ENCODE measurements at regions of chr3 and their contacts with region 1.

Region 1: DNA sequence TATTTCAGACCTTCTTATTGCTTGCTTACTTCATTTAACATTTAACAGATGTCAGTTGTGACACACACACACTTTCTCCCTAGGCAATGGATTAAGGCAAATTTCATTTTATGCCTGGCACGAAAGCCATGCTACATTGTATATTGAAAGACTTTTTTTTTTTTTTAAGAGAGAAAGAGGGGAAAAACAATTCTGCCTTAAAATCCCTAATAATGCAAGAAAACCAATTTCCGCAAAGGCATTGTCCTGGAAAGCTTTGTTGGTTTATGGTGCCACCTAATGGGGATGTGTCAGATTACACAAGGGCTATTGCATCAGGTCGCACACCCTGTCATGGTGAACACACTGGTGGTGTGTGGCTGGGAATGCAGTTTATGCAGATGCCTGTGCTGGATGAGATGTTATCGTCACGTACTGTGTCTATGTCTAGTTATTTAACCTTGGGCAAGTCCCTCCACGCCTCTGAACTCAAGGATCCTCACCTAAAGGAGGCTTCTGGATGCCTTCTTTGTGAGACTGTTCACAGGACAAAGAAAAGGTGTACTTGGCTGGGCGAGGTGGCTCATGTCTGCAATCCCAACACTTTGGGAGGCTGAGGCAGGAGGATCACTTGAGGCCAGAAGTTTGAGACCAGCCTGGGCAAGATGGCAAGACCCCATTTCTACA is 37.3 kb upstream of the RFTN1 start:
- DNase-seq: peak; percentile 71
- ATAC-seq: peak; percentile 85
- H3K4me3 ChIP-seq: no peak overlapping the region
- H3K27ac ChIP-seq: peak overlapping the region; percentile 77; the same call in 1 of the 2 replicates
- H3K4me1 ChIP-seq: no peaks in the 10 kb centered on the region; the same call in 1 of the 2 replicates
- H3K27me3 ChIP-seq: no peaks in the 10 kb centered on the region
- CTCF ChIP-seq: peak; percentile 76

Region 2: DNA sequence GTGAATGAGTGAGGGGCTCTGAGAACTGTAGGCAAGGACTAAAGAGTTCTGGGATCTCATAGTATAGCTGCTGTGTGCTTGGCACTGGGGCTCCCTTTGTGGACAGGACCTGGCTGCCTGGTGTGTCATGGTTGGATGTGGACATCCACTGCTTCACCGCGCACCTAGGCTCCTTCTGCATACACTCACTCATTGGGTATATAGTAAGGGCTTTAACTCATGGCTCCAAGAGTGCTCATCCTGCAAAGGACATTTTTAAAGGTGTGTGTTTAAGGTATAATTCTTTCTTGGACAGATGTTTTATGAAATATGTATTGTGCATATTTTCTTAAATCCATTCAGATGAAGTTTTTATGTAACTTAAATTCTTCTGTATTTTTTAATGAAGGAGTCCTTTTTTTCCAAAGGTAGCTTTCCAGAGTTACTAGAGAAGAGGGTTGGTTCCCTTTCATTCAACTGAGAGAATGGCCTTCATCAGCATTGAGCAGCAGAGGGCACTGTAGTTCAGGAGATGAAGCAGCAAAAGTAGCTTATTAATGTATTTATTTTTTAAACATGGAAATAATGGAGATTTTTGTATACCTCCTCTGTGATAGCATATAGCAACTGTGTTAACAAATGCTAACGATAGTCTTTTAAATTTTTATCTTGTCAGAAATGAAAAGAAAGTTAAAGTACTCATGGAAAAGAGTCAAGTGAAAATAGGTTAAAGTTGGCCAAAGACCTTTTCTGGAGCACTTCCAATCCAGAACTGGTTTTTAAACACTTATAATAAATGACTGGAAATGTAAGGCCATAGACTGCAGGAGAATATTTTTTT is 260.6 kb before region 1 on chr3:
- CTCF ChIA-PET with region 1: interaction called, 11 read pairs
- POLR2A ChIA-PET with region 1: no interaction called
- in situ Hi-C with region 1: no loop called
- intact Hi-C with region 1: loop called (anchors 1 kb)
- DNase-seq: peak; percentile 20
- ATAC-seq: peak; percentile 68; the same call in 1 of the 2 replicates
- H3K4me3 ChIP-seq: no peak overlapping the region
- H3K27ac ChIP-seq: no peak overlapping the region
- H3K4me1 ChIP-seq: no peaks in the 10 kb centered on the region
- H3K27me3 ChIP-seq: no peaks in the 10 kb centered on the region
- CTCF ChIP-seq: peak; percentile 69; the same call in 1 of the 2 replicates